PC-3 (cell line): ENCODE measurements at regions of chr9 and their contacts with region 1.

Region 1: GRCh38 chr9:237858-238345 is 23.2 kb downstream of the DOCK8 start:
- DNase-seq: peak; percentile 65
- ATAC-seq: peak; percentile 91
- H3K4me3 ChIP-seq: no peak overlapping the region
- H3K27ac ChIP-seq: no peak overlapping the region
- H3K4me1 ChIP-seq: peaks cover 6% of the 10 kb centered on the region
- H3K27me3 ChIP-seq: no peaks in the 10 kb centered on the region
- CTCF ChIP-seq: no peak

Region 2: GRCh38 chr9:214648-215493 is 23.0 kb before region 1 on chr9 and contains the start of gene DOCK8:
- CTCF ChIA-PET with region 1: no interaction called
- POLR2A ChIA-PET with region 1: no interaction called
- intact Hi-C with region 1: loop called (anchors 2 kb)
- DNase-seq: peak; percentile 63
- ATAC-seq: peak; percentile 94
- H3K4me3 ChIP-seq: peak within 1 kb of the TSS; percentile 79
- H3K27ac ChIP-seq: no peak within 1 kb of the TSS
- H3K4me1 ChIP-seq: peaks cover 4% of the 10 kb centered on the region; the same call in 1 of the 2 replicates
- H3K27me3 ChIP-seq: no peaks in the 10 kb centered on the region
- CTCF ChIP-seq: peak; percentile 54
- total RNA-seq, gene DOCK8: 1.5 and 1.9 TPM in 2 replicates